Activated CD4-positive, alpha-beta memory T cell treated with anti-CD3 and anti-CD28 coated beads, Interleukin-2, amount 10 ng/mL, durations not matched to agents 7 days and 5 days (primary cell): ENCODE measurements at regions of chr5 and their contacts with region 1.

Region 1: GRCh38 chr5:172932313-172933017 is 26.8 kb upstream of the RPL26L1 start:
- DNase-seq: peak; percentile 74
- H3K4me3 Mint-ChIP-seq: no peak overlapping the region
- H3K27ac Mint-ChIP-seq: no peak overlapping the region
- H3K4me1 Mint-ChIP-seq: no peaks in the 10 kb centered on the region
- H3K27me3 Mint-ChIP-seq: no peaks in the 10 kb centered on the region

Region 2: GRCh38 chr5:172714491-172715421 is 217.7 kb before region 1 on chr5:
- CTCF ChIA-PET with region 1: interaction called, 258 read pairs
- POLR2A ChIA-PET with region 1: interaction called, 5 read pairs
- DNase-seq: peak; percentile 66
- H3K4me3 Mint-ChIP-seq: no peak overlapping the region
- H3K27ac Mint-ChIP-seq: no peak overlapping the region
- H3K4me1 Mint-ChIP-seq: peaks cover 6% of the 10 kb centered on the region
- H3K27me3 Mint-ChIP-seq: peaks cover 10% of the 10 kb centered on the region

Region 3: GRCh38 chr5:172721301-172722130 is 210.9 kb before region 1 on chr5:
- CTCF ChIA-PET with region 1: interaction called, 44 read pairs
- POLR2A ChIA-PET with region 1: interaction called, 5 read pairs
- DNase-seq: no peak
- H3K4me3 Mint-ChIP-seq: no peak overlapping the region
- H3K27ac Mint-ChIP-seq: no peak overlapping the region
- H3K4me1 Mint-ChIP-seq: peaks cover 18% of the 10 kb centered on the region
- H3K27me3 Mint-ChIP-seq: peaks cover 15% of the 10 kb centered on the region